ENCODE measurements at regions of chr11 and their contacts with region 1.

Region 1: GRCh38 chr11:45899448-45900173 is 7.5 kb downstream of the FREY1 start:
- DNase-seq: peak; percentile 80
- ATAC-seq: peak; percentile 86
- H3K4me3 Mint-ChIP-seq: peak overlapping the region; percentile 40
- H3K27ac Mint-ChIP-seq: no peak overlapping the region
- H3K4me1 Mint-ChIP-seq: peaks cover 2% of the 10 kb centered on the region
- H3K27me3 Mint-ChIP-seq: peaks cover 26% of the 10 kb centered on the region

Region 2: DNA sequence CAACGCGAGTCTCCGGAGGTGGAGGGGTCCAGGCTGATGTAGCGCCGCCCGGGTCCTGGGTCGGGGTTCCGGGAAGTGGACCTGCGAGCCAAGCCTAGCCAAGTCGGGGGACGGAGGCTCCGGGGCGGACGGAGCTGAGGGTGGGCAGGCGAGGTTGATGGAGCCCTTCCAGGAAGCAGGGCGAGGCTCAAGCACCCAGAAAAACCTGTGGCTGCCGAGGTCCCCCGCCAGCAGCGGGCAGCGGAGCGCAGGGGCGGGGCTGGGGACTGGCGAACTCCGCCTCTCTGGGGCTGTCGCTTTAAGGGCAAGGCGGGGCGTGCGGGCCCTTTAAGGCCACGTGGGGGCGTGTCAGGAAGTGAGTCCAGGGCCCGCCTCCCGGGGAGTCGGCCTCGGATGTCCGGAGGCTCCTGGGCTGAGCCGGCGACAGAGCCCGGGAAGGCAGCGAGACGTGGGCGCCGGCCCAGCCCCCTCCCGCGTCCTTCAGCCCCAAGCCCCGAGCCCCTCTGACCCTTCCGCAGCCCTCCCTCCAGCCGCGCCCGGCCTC is 94.8 kb before region 1 on chr11 and contains the start of gene SLC35C1:
- CTCF ChIA-PET with region 1: no interaction called
- POLR2A ChIA-PET with region 1: interaction called, 3 read pairs
- intact Hi-C with region 1: loop called in 1 of 2 experiments (anchors 1 kb)
- DNase-seq: peak; percentile 98
- ATAC-seq: peak; percentile 97
- H3K4me3 Mint-ChIP-seq: peak within 1 kb of the TSS; percentile 91
- H3K27ac Mint-ChIP-seq: peak within 1 kb of the TSS; percentile 86
- H3K4me1 Mint-ChIP-seq: peaks cover 42% of the 10 kb centered on the region
- H3K27me3 Mint-ChIP-seq: no peaks in the 10 kb centered on the region
- total RNA-seq, gene SLC35C1: 9.6 to 9.8 TPM

Region 3: GRCh38 chr11:45885274-45885920 is 14.2 kb before region 1 on chr11 and contains the start of gene MAPK8IP1:
- CTCF ChIA-PET with region 1: interaction called, 5 read pairs
- POLR2A ChIA-PET with region 1: no interaction called
- intact Hi-C with region 1: loop called in 1 of 2 experiments (anchors 1 kb)
- DNase-seq: peak; percentile 68
- ATAC-seq: peak; percentile 89
- H3K4me3 Mint-ChIP-seq: peak within 1 kb of the TSS; percentile 66
- H3K27ac Mint-ChIP-seq: no peak within 1 kb of the TSS
- H3K4me1 Mint-ChIP-seq: peaks cover 8% of the 10 kb centered on the region
- H3K27me3 Mint-ChIP-seq: peaks cover 3% of the 10 kb centered on the region
- total RNA-seq, gene MAPK8IP1: 0.37 to 0.39 TPM

Region 4: DNA sequence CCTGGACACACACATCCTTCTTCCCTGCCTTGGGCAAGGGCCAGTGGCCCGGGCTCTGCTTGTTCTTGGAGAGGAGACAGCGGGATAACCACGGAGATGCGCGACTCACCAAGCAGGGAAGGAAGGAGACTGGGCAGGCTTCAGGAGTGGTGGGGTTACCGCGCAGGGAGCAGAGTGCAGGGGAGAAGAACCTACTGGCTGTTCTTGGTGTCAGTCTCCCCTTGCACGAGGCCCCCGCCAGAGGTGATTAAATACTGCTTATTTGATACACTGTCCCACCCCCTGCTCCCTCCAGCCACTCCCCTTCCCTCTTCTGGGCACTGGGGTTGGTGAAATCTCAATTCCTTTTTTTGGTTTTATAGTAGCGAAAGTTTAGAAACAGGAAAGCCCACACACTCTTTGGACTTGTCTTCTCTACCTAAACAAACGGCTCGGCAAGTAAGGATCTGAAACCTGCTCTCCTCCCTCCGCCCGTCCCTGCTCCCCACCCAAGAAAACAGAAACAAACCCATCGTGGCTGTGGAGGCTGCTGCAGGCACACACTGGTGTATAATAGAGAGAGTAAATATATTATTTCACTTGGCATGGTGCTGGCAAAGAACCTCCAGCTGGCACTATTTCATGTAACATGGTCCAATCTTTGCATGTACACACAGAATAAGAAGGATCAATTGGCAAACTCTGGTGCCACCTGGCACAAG is 33.7 kb after region 1 on chr11:
- CTCF ChIA-PET with region 1: no interaction called
- POLR2A ChIA-PET with region 1: no interaction called
- intact Hi-C with region 1: no loop called
- DNase-seq: no peak
- ATAC-seq: no peak
- H3K4me3 Mint-ChIP-seq: no peak overlapping the region
- H3K27ac Mint-ChIP-seq: no peak overlapping the region
- H3K4me1 Mint-ChIP-seq: peaks cover 18% of the 10 kb centered on the region
- H3K27me3 Mint-ChIP-seq: no peaks in the 10 kb centered on the region

Region 5: GRCh38 chr11:47373876-47374720 is 1474.5 kb after region 1 on chr11:
- CTCF ChIA-PET with region 1: no interaction called
- POLR2A ChIA-PET with region 1: no interaction called
- intact Hi-C with region 1: no loop called
- DNase-seq: peak; percentile 92
- ATAC-seq: peak; percentile 89
- H3K4me3 Mint-ChIP-seq: no peak overlapping the region
- H3K27ac Mint-ChIP-seq: peak overlapping the region; percentile 25
- H3K4me1 Mint-ChIP-seq: peaks cover 22% of the 10 kb centered on the region
- H3K27me3 Mint-ChIP-seq: no peaks in the 10 kb centered on the region